ENCODE measurements at regions of chr13 and their contacts with region 1.

Region 1: GRCh38 chr13:88717946-88718345 is 1046.8 kb downstream of the SLITRK5 start:
- DNase-seq: no peak
- H3K4me3 ChIP-seq: no peak overlapping the region
- H3K27ac ChIP-seq: no peak overlapping the region
- H3K4me1 ChIP-seq: no peaks in the 10 kb centered on the region
- H3K27me3 ChIP-seq: no peaks in the 10 kb centered on the region
- CTCF ChIP-seq: no peak

Region 2: DNA sequence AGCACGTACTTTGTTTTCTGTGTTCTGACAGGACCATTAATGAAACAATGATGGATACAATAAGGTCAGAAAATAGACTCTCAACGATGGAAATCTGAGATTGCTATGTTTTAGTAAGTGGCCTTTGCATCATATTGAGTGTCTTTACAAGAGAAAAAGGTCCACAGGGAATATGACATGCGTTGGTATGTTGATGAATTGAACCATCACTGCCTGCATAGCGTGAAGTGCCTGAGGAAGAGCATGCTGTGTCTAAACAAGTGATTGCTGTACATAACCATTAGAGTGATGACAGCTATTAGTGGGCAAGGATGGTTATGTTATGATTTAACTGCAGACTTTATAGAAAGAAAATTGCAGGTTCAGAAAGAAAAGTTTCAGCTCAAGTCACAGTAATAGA is 423.6 kb before region 1 on chr13:
- CTCF ChIA-PET with region 1: no interaction called
- POLR2A ChIA-PET with region 1: no interaction called
- intact Hi-C with region 1: no loop called
- DNase-seq: no peak
- H3K4me3 ChIP-seq: no peak overlapping the region
- H3K27ac ChIP-seq: no peak overlapping the region
- H3K4me1 ChIP-seq: no peaks in the 10 kb centered on the region
- H3K27me3 ChIP-seq: no peaks in the 10 kb centered on the region
- CTCF ChIP-seq: no peak

Region 3: DNA sequence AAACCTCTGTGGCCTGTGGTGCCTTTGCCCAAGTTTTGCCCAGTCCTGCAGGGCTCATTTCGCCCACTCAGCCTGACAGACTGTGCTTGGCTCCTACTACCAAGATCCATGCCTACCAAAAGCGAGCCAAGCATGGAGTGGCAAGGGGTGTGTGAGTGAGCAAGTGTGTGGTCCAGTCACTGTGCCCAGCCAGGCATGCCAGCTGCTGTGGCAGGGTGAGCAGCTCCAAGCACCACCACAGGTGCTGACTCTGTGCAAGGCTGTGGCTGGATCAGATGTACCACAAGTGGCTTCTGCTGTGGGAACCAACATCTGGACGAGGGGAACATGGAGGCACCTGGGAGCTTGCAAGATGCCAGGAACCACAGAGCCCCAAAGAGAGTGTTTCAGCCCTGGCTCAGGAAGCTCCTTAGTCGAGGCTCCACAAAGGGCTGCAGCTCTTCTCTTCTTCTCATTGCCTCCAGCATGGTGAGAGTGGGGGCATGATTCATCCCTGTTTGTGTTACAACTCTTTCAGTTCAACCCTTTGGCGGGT is 1065.3 kb after region 1 on chr13:
- CTCF ChIA-PET with region 1: no interaction called
- POLR2A ChIA-PET with region 1: no interaction called
- intact Hi-C with region 1: loop called (anchors 10 kb)
- DNase-seq: no peak
- H3K4me3 ChIP-seq: no peak overlapping the region
- H3K27ac ChIP-seq: no peak overlapping the region
- H3K4me1 ChIP-seq: no peaks in the 10 kb centered on the region
- H3K27me3 ChIP-seq: no peaks in the 10 kb centered on the region
- CTCF ChIP-seq: no peak